Activated B cell treated with CpG ODN at 0.5 μM for 24 hours (primary cell): ENCODE measurements at regions of chr17 and their contacts with region 1.

Region 1: GRCh38 chr17:50689251-50689650 is 18.5 kb downstream of the ANKRD40 start:
- DNase-seq: no peak
- ATAC-seq: no peak
- H3K4me3 Mint-ChIP-seq: no peak overlapping the region
- H3K27ac Mint-ChIP-seq: no peak overlapping the region
- H3K4me1 Mint-ChIP-seq: no peaks in the 10 kb centered on the region
- H3K27me3 Mint-ChIP-seq: no peaks in the 10 kb centered on the region
- CTCF ChIP-seq: no peak

Region 2: DNA sequence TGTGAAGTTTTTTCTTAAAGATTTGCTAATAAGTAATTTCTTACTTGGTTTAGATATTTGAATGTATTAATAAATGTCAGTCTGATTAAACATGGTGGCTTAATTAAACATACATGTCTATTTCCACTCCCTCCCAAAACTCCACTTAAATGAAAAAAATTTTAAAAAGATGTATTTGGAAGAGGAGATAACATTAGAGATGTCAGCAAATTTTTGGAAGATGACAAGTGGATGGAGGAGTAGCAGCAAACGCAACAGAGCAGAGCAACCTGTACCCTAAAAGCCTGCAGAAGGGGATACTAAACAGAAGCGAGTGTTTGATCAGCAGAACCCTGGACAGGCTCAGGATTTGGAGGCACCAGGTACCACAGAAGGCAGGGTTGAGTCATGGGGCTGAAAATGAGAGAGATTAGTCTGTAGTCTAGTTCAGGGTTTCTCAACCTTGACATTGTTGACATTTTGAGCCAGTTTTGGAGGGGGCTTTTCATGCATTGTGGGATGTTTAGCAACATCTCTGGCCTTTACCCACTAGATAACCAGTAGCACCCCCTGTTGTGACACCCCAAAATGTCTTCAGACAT is 48.0 kb after region 1 on chr17:
- CTCF ChIA-PET with region 1: no interaction called
- POLR2A ChIA-PET with region 1: interaction called, 13 read pairs
- intact Hi-C with region 1: no loop called
- DNase-seq: no peak
- ATAC-seq: no peak
- H3K4me3 Mint-ChIP-seq: no peak overlapping the region
- H3K27ac Mint-ChIP-seq: peak overlapping the region; percentile 46
- H3K4me1 Mint-ChIP-seq: peaks cover 25% of the 10 kb centered on the region
- H3K27me3 Mint-ChIP-seq: no peaks in the 10 kb centered on the region
- CTCF ChIP-seq: no peak